Activated naive CD4-positive, alpha-beta T cell treated with anti-CD3 and anti-CD28 coated beads for 36 hours (primary cell): ENCODE measurements at regions of chr3 and their contacts with region 1.

Region 1: DNA sequence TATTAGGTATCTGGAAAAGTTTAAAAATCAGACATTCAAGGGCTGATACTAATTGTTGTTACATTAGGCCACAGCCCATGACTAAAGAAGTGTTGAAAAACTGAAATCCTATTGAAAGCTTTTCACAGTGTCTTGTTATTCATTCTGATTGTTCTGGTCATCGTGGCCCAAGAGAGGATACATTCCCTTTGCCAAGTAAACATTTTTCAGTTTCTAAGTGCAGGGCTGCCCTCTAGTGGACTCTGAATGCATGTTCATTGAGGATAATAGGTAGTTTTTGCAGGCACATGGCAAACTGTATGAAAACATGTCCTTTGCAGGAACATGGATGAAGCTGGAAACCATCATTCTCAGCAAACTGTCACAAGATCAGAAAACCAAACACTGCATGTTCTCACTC is 181.1 kb downstream of the MYRIP start:
- DNase-seq: peak; percentile 49
- H3K4me3 Mint-ChIP-seq: no peak overlapping the region
- H3K27ac Mint-ChIP-seq: no peak overlapping the region
- H3K4me1 Mint-ChIP-seq: no peaks in the 10 kb centered on the region
- H3K27me3 Mint-ChIP-seq: peaks cover 15% of the 10 kb centered on the region

Region 2: GRCh38 chr3:39447637-39448483 is 542.7 kb before region 1 on chr3:
- CTCF ChIA-PET with region 1: interaction called, 3 read pairs
- intact Hi-C with region 1: loop called (anchors 2 kb)
- DNase-seq: peak; percentile 78
- H3K4me3 Mint-ChIP-seq: no peak overlapping the region
- H3K27ac Mint-ChIP-seq: no peak overlapping the region
- H3K4me1 Mint-ChIP-seq: no peaks in the 10 kb centered on the region
- H3K27me3 Mint-ChIP-seq: no peaks in the 10 kb centered on the region

Region 3: DNA sequence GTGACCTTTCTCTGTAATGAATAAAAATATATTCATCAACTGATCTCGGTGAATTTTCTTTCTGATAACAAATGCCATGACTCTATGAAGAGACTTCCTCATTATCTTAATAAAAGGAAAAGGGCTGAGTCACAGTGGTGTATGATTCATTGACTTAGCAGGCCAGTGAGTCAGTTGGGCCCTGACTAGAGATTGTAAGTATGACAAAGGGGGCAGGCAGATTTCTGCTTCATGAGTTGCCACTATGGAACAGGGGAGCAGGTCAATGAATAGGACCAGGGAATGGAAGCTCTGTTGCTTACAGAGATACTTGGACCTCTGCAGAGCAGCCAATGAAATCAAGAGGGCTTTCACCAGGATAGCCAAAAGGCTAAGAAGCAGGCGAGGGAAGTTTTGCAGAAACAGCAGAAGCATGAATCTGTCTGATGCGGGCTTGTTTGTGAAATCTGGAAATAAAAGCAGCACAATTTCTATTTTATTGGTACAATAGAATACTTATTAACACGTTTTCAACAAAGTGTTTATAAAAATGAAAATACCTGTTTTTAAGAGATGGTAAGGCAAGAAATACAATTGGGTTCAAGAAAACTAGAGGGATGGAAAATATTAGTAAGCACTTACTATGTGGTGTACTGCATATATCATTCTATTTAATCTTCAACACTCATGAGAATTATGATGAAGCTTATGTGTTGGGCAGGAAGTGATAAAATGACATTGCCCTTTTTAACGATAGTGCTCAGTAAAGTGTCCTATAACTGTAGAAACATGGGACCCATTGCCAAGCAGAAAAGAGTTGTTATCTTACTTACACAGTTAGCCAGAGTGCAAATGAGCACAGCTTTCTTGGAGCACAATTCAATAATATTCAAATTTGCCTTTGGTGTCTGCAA is 350.9 kb before region 1 on chr3:
- CTCF ChIA-PET with region 1: interaction called, 3 read pairs
- intact Hi-C with region 1: loop called (anchors 2 kb)
- DNase-seq: peak; percentile 44
- H3K4me3 Mint-ChIP-seq: no peak overlapping the region
- H3K27ac Mint-ChIP-seq: no peak overlapping the region
- H3K4me1 Mint-ChIP-seq: peaks cover 12% of the 10 kb centered on the region
- H3K27me3 Mint-ChIP-seq: peaks cover 14% of the 10 kb centered on the region

Region 4: GRCh38 chr3:39724233-39724846 is 266.2 kb before region 1 on chr3:
- CTCF ChIA-PET with region 1: no interaction called
- intact Hi-C with region 1: loop called (anchors 5 kb)
- DNase-seq: no peak
- H3K4me3 Mint-ChIP-seq: no peak overlapping the region
- H3K27ac Mint-ChIP-seq: no peak overlapping the region
- H3K4me1 Mint-ChIP-seq: no peaks in the 10 kb centered on the region
- H3K27me3 Mint-ChIP-seq: no peaks in the 10 kb centered on the region